HepG2 (cell line): ENCODE measurements at regions of chr16 and their contacts with region 1.

Region 1: GRCh38 chr16:23365602-23366240 is 63.6 kb downstream of the SCNN1B start:
- DNase-seq: no peak
- ATAC-seq: 0 out of 3 replicates have a peak, but pooled peaks have one; percentile 24
- H3K4me3 ChIP-seq: no peak overlapping the region
- H3K27ac ChIP-seq: no peak overlapping the region
- H3K4me1 ChIP-seq: no peaks in the 10 kb centered on the region
- H3K27me3 ChIP-seq: peaks cover 3 to 24% of the 10 kb centered on the region in 2 experiments
- CTCF ChIP-seq: no peak
- EP300 ChIP-seq: no peak
- POLR2A ChIP-seq: no peak
- RAD21 ChIP-seq: no peak

Region 2: DNA sequence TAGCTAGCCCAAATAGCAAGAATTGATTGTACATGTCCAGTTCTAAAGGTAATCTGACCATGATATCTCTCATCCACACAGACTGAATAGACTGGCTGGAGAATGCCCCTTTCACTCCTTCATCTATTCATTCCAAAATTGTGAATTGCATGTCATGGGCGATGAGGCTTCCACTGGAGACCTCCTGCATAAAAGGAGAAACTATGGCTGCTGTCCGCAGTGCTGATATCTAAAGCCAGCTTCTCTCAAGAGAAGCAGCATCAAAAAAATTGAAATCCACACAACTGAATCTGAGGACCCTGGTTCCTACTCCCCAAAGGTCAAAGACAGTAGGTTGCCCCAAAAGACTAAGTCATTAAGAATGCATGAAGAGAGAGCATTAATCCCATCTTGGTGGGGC is 191.1 kb before region 1 on chr16:
- CTCF ChIA-PET with region 1: no interaction called
- POLR2A ChIA-PET with region 1: no interaction called
- in situ Hi-C with region 1: no loop called
- intact Hi-C with region 1: no loop called
- DNase-seq: no peak
- ATAC-seq: peak; percentile 35; the same call in 1 of the 3 replicates
- H3K4me3 ChIP-seq: no peak overlapping the region
- H3K27ac ChIP-seq: no peak overlapping the region
- H3K4me1 ChIP-seq: no peaks in the 10 kb centered on the region
- H3K27me3 ChIP-seq: peaks cover 0 to 10% of the 10 kb centered on the region in 2 experiments; a peak in 2 of 5 replicates
- CTCF ChIP-seq: no peak
- EP300 ChIP-seq: no peak
- POLR2A ChIP-seq: no peak
- RAD21 ChIP-seq: no peak

Region 3: DNA sequence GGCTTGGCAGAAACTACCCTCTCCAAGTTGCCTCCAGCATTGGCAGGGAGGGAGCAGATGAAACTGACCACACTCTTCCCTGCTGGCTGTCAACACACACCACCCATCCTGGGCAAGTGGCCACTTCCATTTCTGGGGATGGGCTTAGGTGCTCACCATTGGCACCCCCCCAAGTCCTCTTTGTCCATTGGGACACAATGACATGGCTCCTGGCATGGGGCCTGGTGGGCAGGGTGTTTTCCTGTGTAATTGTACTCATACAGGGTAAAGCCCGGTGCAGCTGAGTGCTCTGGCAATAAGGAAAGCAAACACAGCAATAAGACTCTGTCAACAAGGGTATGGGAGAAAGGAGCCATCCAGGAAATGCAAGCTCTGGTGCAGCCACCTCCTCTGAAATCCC is 41.0 kb before region 1 on chr16:
- CTCF ChIA-PET with region 1: no interaction called
- POLR2A ChIA-PET with region 1: no interaction called
- in situ Hi-C with region 1: no loop called
- intact Hi-C with region 1: loop called (anchors 1 kb)
- DNase-seq: peak; percentile 44
- ATAC-seq: peak; percentile 83
- H3K4me3 ChIP-seq: no peak overlapping the region
- H3K27ac ChIP-seq: no peak overlapping the region
- H3K4me1 ChIP-seq: peaks cover 9% of the 10 kb centered on the region
- H3K27me3 ChIP-seq: peaks cover 5 to 27% of the 10 kb centered on the region in 2 experiments; a peak in 3 of 5 replicates
- CTCF ChIP-seq: no peak
- EP300 ChIP-seq: no peak
- POLR2A ChIP-seq: no peak
- RAD21 ChIP-seq: no peak

Region 4: GRCh38 chr16:23382279-23382678 is 16.6 kb after region 1 on chr16:
- CTCF ChIA-PET with region 1: no interaction called
- POLR2A ChIA-PET with region 1: no interaction called
- in situ Hi-C with region 1: no loop called
- intact Hi-C with region 1: no loop called
- DNase-seq: no peak
- ATAC-seq: no peak
- H3K4me3 ChIP-seq: no peak overlapping the region
- H3K27ac ChIP-seq: no peak overlapping the region
- H3K4me1 ChIP-seq: no peaks in the 10 kb centered on the region
- H3K27me3 ChIP-seq: peaks cover 3 to 14% of the 10 kb centered on the region in 2 experiments; a peak in 4 of 5 replicates
- CTCF ChIP-seq: no peak
- EP300 ChIP-seq: no peak
- POLR2A ChIP-seq: no peak
- RAD21 ChIP-seq: no peak